ENCODE measurements at regions of chr3 and their contacts with region 1.

Region 1: GRCh38 chr3:43766672-43767465 is 76.1 kb downstream of the ABHD5 start:
- DNase-seq: peak; percentile 53
- H3K4me3 ChIP-seq: no peak overlapping the region
- H3K27me3 ChIP-seq: no peaks in the 10 kb centered on the region
- CTCF ChIP-seq: no peak

Region 2: DNA sequence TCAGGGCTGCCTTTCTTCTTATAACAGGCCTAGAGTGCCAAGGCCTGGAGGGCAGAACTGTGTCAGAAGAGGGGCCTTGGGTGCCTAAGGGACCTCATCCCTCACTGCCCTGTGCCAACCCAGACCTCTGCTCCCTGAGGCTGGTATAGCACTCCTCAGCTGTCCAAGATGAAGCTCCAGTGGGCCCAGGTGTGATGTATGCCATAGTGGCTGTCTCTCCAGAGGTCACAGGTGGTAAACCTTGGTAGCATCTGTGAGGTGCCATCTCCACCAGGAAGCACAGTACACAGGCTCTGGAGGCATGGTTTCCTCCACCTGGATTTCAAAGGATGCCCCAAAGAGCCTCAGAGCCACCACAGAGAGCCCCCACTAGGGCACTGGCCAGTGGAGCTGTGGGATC is 1093.8 kb before region 1 on chr3:
- CTCF ChIA-PET with region 1: no interaction called
- POLR2A ChIA-PET with region 1: no interaction called
- DNase-seq: no peak
- H3K4me3 ChIP-seq: no peak overlapping the region
- H3K27me3 ChIP-seq: peaks cover 1% of the 10 kb centered on the region; the same call in 1 of the 2 replicates
- CTCF ChIP-seq: no peak

Region 3: DNA sequence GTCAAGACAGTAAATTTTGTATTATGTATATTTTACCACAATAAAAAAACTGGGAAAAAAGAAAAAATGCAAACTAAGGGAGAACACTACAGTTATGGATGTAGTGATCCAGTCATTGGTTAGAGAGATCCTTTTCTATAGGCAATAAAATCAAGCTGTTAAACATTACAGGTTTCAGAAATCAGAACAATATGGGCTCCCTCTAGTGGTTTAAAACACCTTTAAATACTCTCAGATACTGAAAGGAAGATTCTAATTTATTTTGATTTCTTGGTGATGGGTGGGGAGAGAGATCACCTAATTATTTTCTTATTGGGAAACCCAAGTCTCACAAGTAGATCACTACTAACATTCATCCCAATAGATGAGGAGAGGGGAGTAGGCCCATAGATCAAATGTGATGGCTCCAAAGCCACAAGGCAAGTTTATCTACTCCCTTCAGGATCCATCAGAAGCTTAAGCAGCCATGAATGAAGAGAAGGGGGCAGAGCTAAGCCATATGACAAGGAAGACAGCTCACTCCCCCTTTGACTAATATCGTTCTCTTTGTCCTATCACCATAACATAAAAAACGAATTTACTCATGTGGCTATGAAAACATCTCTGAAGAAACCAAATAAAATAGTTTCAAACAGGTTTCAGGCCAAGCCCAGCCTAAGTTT is 263.7 kb before region 1 on chr3:
- CTCF ChIA-PET with region 1: no interaction called
- POLR2A ChIA-PET with region 1: no interaction called
- DNase-seq: no peak
- H3K4me3 ChIP-seq: no peak overlapping the region
- H3K27me3 ChIP-seq: no peaks in the 10 kb centered on the region
- CTCF ChIP-seq: peak; percentile 42

Region 4: GRCh38 chr3:43632269-43632733 is 134.6 kb before region 1 on chr3:
- CTCF ChIA-PET with region 1: no interaction called
- POLR2A ChIA-PET with region 1: interaction called, 21 read pairs
- DNase-seq: peak; percentile 52
- H3K4me3 ChIP-seq: no peak overlapping the region
- H3K27me3 ChIP-seq: no peaks in the 10 kb centered on the region
- CTCF ChIP-seq: no peak

Region 5: DNA sequence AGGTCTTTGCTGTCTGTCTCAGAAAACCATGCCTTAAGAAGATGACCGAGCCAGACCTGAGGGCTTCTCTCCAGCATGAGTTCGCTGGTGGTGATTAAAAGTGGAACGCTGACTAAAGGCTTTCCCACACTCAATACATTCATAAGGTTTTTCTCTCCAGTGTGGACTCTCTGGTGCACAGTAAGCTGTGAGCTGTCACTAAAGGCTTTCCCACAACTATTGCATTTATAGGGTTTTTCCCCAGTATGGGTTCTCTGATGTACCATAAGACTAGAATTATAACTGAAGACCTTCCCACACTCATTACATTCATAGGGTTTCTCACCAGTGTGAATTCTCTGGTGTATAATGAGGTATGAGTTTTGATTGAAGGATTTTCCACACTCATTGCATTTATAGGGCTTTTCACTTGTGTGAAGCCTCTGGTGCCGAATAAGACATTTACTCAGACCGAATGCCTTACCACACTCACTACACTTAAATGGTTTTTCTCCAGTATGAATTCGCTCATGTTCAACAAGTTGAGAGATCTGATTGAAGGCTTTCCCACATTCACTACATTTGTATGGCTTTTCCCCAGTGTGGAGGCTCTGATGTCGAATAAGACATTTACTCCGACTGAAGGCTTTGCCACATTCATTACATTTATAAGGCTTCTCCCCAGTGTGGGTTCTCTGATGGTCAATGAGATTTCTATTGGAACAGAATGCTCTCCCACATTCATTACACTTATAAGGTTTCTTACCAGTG is 732.5 kb after region 1 on chr3:
- CTCF ChIA-PET with region 1: no interaction called
- POLR2A ChIA-PET with region 1: no interaction called
- DNase-seq: no peak
- H3K4me3 ChIP-seq: no peak overlapping the region
- H3K27me3 ChIP-seq: no peaks in the 10 kb centered on the region
- CTCF ChIP-seq: no peak